ENCODE measurements at regions of chr9 and their contacts with region 1.

Region 1: GRCh38 chr9:6008169-6008979 is 7.0 kb downstream of the RANBP6 start:
- DNase-seq: peak; percentile 97
- H3K4me3 Mint-ChIP-seq: peak overlapping the region; percentile 74
- H3K27ac Mint-ChIP-seq: peak overlapping the region; percentile 79
- H3K4me1 Mint-ChIP-seq: peaks cover 56% of the 10 kb centered on the region
- H3K27me3 Mint-ChIP-seq: no peaks in the 10 kb centered on the region

Region 2: GRCh38 chr9:4679268-4680172 is 1328.9 kb before region 1 on chr9 and contains the start of gene CDC37L1:
- CTCF ChIA-PET with region 1: no interaction called
- POLR2A ChIA-PET with region 1: no interaction called
- intact Hi-C with region 1: loop called (anchors 5 kb)
- DNase-seq: peak; percentile 99
- H3K4me3 Mint-ChIP-seq: no peak within 1 kb of the TSS
- H3K27ac Mint-ChIP-seq: no peak within 1 kb of the TSS
- H3K4me1 Mint-ChIP-seq: peaks cover 10% of the 10 kb centered on the region
- H3K27me3 Mint-ChIP-seq: no peaks in the 10 kb centered on the region
- total RNA-seq, gene CDC37L1: 9.7 to 11.0 TPM

Region 3: DNA sequence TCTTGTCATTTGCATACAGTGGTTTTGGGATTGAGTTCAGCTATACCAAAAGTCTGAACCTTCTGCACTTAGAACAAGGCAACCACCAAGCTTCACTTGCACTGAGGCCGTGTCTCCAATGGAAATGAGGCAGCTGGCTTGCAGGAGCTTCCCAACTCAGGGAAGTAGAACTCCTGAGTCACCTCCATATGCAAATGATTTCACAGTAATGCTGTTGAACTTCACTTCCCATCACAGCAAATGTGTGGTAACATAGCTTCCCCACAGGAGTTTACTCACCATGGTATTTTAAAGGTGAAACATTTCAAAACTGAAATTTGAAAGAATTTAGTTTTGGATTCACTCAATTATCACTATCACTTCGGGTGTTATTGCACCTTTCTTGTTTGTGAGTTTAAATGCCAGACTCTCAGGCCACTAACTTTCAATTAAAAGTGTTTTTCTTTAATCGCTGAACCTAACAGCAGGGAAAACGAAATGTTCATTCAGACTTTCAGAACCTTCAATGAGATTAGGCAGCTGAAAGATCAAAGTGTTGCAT is 549.0 kb before region 1 on chr9:
- CTCF ChIA-PET with region 1: no interaction called
- POLR2A ChIA-PET with region 1: no interaction called
- intact Hi-C with region 1: loop called (anchors 1 kb)
- DNase-seq: peak; percentile 57
- H3K4me3 Mint-ChIP-seq: peak overlapping the region; percentile 68
- H3K27ac Mint-ChIP-seq: peak overlapping the region; percentile 87
- H3K4me1 Mint-ChIP-seq: peaks cover 73% of the 10 kb centered on the region
- H3K27me3 Mint-ChIP-seq: no peaks in the 10 kb centered on the region

Region 4: GRCh38 chr9:5949103-5949699 is 59.2 kb before region 1 on chr9:
- CTCF ChIA-PET with region 1: no interaction called
- POLR2A ChIA-PET with region 1: no interaction called
- intact Hi-C with region 1: loop called (anchors 1 kb)
- DNase-seq: peak; percentile 35
- H3K4me3 Mint-ChIP-seq: no peak overlapping the region
- H3K27ac Mint-ChIP-seq: no peak overlapping the region
- H3K4me1 Mint-ChIP-seq: peaks cover 27% of the 10 kb centered on the region
- H3K27me3 Mint-ChIP-seq: no peaks in the 10 kb centered on the region

Region 5: DNA sequence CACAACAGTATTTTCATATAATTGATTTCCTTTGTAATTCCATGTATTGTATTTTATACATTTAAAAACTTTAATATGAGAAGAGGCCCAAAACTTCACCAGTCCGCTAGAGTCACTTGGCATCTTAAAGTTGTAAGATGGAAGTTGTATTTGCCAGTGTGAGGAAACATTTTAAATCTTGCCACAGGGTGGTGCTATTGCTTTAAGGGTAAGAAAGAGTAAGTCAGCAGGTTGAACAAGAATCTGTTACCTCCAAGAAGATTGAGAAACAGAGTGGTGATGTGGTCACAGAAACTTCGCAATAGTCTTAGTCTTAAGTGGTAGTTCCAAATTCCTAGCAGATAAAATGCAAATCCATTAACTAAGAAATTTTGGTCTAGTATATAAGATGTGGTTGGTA is 46.8 kb after region 1 on chr9:
- CTCF ChIA-PET with region 1: interaction called, 10 read pairs
- POLR2A ChIA-PET with region 1: no interaction called
- intact Hi-C with region 1: no loop called
- DNase-seq: no peak
- H3K4me3 Mint-ChIP-seq: no peak overlapping the region
- H3K27ac Mint-ChIP-seq: no peak overlapping the region
- H3K4me1 Mint-ChIP-seq: peaks cover under 1% of the 10 kb centered on the region
- H3K27me3 Mint-ChIP-seq: no peaks in the 10 kb centered on the region

Region 6: GRCh38 chr9:6068983-6069382 is 60.6 kb after region 1 on chr9:
- CTCF ChIA-PET with region 1: no interaction called
- POLR2A ChIA-PET with region 1: no interaction called
- intact Hi-C with region 1: no loop called
- DNase-seq: no peak
- H3K4me3 Mint-ChIP-seq: no peak overlapping the region
- H3K27ac Mint-ChIP-seq: peak overlapping the region; percentile 66
- H3K4me1 Mint-ChIP-seq: peaks cover 18% of the 10 kb centered on the region
- H3K27me3 Mint-ChIP-seq: no peaks in the 10 kb centered on the region

Region 7: DNA sequence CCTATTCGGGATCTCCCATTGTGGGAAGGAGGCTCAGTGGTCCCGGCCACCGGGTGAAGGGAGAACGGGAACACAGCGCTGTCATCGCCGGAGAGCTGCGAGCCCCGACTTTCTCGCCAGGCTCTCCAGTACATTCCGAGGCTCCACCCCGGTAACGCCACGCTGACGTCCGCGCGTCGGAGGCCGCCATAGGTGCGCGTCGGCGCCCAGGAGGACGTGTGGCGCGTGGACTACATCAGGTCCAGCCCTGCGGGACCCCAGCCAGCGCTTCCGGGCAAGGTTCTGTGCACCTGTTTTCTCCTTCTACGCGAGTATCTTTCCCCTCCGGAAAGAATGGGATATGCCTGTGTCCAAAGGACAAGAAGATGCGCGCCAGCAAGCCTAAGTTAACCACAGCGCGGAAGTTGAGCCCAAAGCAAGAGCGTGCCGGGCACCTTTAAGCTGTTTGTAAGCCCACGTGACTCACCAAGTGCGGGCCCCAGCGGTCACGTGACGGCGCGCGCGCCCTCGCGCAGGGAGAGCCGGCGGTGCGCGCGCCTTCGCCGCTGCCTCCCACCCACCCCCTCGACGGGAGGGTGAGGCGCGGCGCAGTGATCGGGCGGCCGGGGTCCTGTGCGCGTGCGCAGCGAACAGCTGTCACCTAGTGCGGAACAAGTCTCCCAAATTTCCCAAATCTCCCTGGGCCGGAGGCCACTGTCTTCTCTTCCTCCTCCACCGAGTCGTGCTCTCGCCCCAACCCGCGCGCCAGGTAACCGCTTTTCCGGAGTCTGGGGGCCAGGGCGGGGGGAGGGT is 749.3 kb after region 1 on chr9 and contains the start of gene KDM4C:
- CTCF ChIA-PET with region 1: no interaction called
- POLR2A ChIA-PET with region 1: no interaction called
- intact Hi-C with region 1: loop called (anchors 1 kb)
- DNase-seq: peak; percentile 96
- H3K4me3 Mint-ChIP-seq: peak within 1 kb of the TSS; percentile 94
- H3K27ac Mint-ChIP-seq: peak within 1 kb of the TSS; percentile 98
- H3K4me1 Mint-ChIP-seq: peaks cover 32% of the 10 kb centered on the region
- H3K27me3 Mint-ChIP-seq: no peaks in the 10 kb centered on the region
- total RNA-seq, gene KDM4C: 26.2 to 28.8 TPM